ENCODE measurements at regions of chr22 and their contacts with region 1.

Region 1: DNA sequence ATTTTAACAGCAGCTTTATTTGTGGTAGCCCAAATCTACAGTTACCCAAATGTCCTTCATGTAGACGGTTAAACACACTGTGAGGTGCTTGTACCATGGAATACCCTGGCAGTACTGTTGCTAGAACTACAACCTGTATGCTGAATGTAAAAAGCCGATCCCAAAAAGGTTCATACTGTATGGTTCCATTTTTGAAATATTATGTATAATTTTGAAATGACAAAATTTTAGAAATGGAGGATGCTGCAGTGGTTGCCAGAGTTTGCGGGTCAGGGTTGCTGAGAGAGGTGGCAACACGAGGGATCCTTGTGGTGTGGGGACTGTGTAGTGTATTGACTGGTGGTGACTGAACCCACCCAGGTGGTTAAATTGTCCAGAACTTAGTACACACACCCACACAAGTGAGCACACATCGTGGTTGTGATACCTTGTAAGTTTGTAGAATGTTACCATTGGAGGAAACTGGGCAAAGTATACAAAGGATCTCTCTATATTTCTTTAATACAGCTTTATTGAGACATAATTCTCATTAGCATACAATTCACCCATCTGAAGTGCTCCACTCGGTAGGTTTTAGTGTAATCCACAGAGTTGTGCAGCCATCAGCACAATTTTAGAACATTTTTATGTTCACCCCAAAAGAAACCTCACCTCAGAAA is 56.0 kb downstream of the MED15 start:
- DNase-seq: no peak
- ATAC-seq: no peak
- H3K4me3 ChIP-seq: no peak overlapping the region
- H3K27ac ChIP-seq: no peak overlapping the region; a peak in 1 of 6 replicates
- H3K4me1 ChIP-seq: peaks cover 37% of the 10 kb centered on the region
- CTCF ChIP-seq: no peak
- EP300 ChIP-seq: no peak
- POLR2A ChIP-seq: no peak
- RAD21 ChIP-seq: no peak

Region 2: DNA sequence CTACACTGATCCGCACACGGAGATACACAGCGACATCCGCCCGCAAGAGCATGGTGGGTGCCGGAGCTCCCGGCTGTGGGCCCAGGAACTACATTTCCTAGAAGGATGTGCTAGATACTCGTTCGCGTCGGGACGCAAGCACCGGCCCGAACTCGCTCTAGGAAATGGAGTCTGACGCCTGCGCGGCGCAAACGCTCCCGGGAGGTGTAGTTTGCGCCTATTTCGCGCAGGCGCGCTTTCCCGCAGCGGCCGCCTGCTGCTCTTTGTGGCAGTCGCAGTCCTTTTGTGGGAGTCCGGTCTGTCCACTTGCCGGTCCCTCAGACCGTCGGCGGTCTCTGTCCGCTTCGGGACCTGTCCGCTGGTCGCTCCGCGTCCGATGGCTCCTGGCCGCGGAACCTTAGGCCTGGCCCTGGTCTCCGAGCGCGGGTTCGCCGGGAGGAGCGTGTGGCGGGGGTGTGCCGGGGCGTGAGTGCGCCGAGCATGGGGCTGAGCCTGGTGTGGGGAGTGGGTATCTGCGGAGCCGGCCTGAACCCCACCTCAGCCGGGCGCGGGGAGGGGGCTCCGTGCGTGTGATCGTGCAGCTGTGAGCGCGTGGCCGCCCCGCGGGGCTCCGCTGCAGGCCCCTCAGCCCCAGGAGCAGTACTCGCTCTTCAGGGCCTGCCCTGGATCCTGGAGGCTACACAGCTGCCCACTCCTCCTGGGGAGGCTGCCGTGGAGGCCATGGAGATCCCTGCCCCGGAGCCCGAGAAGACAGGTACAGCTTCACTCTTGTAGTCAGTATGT is 169.3 kb before region 1 on chr22 and contains the start of gene ZNF74:
- CTCF ChIA-PET with region 1: no interaction called
- POLR2A ChIA-PET with region 1: no interaction called
- DNase-seq: peak; percentile 31 to 85
- ATAC-seq: peak; percentile 87 to 95
- H3K4me3 ChIP-seq: peak within 1 kb of the TSS; percentile 60
- H3K27ac ChIP-seq: peak within 1 kb of the TSS; percentile 82 to 86
- H3K4me1 ChIP-seq: peaks cover 8% of the 10 kb centered on the region; the same call in 2 of the 3 replicates
- CTCF ChIP-seq: no peak
- EP300 ChIP-seq: no peak
- POLR2A ChIP-seq: peak; percentile 80
- RAD21 ChIP-seq: no peak
- polyA plus RNA-seq, gene ZNF74: 4.3 and 5.1 TPM in 2 replicates

Region 3: DNA sequence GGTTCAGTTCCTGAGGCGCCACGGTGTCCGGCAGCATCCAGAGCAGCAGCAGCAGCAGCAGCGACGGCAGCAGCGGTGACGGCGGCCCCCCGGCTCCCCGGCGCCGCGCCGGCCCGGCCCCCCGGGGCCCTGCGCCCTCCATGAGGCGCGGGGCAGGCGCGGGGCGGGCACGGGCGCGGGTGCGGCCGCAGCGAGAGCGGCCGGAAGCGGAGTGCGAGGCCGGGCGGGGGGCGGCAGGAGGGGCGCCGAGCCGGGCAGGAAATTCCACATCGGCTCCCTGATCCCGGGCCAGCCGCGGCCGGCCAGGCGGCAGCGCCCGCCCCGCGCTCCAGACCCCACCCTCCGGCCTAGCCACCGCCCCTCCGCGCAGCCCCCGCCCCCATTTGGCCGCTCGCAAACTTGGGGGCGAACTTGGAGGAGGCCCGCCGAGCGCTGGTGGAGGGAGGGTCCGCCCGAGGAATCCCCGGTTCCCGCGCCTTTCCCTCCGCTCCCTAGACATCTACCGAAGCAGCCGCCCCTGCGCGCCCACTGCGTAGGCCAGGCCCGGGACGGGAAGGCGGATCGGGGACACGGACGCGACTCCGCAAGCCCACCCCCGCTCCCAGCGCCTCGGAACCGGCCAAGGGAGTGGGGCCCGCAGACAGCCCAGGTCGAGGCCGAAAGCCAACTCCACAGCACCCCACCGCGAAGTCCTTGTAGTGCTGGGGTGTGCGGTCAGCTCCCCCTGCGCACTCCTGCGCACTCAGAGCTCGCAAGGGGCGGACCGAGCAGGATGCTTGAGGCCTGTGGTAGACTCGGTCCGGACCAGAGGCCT is 125.6 kb before region 1 on chr22 and contains the start of gene SCARF2:
- CTCF ChIA-PET with region 1: no interaction called
- POLR2A ChIA-PET with region 1: no interaction called
- DNase-seq: no peak
- ATAC-seq: no peak
- H3K4me3 ChIP-seq: peak within 1 kb of the TSS; percentile 44
- H3K27ac ChIP-seq: peak within 1 kb of the TSS; percentile 44 to 82; a peak in 3 of 6 replicates
- H3K4me1 ChIP-seq: no peaks in the 10 kb centered on the region
- CTCF ChIP-seq: no peak
- EP300 ChIP-seq: no peak
- POLR2A ChIP-seq: no peak
- RAD21 ChIP-seq: no peak
- polyA plus RNA-seq, gene SCARF2: 0.25 and 0.35 TPM in 2 replicates

Region 4: DNA sequence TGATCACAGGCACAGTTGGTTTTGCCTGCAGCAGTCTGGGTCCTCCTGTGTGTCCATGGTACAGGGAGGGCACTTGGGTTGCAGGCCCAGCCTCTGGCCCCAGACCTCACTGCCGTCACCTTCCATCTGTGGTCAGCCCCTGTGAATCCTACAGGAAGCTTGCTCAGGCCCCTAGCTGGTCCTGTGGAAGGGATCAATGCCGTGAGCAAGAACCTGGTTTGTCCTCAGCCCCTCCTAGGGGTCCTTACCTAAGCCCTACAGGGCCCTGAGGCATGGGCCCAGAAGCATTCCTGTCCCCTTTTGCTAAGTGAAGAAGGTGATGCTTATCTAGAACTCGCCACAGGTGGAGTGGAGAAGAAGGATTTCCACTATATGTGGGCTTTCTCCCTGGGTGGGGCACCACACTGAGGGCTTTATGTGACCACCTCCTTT is 26.0 kb before region 1 on chr22:
- CTCF ChIA-PET with region 1: interaction called, 13 read pairs
- POLR2A ChIA-PET with region 1: no interaction called
- DNase-seq: no peak
- ATAC-seq: no peak
- H3K4me3 ChIP-seq: no peak overlapping the region
- H3K27ac ChIP-seq: no peak overlapping the region
- H3K4me1 ChIP-seq: peaks cover 10% of the 10 kb centered on the region
- CTCF ChIP-seq: no peak
- EP300 ChIP-seq: no peak
- POLR2A ChIP-seq: no peak
- RAD21 ChIP-seq: no peak